Posterior cingulate gyrus (tissue), 11 donors: ENCODE measurements at regions of chr6 and their contacts with region 1.

Region 1: DNA sequence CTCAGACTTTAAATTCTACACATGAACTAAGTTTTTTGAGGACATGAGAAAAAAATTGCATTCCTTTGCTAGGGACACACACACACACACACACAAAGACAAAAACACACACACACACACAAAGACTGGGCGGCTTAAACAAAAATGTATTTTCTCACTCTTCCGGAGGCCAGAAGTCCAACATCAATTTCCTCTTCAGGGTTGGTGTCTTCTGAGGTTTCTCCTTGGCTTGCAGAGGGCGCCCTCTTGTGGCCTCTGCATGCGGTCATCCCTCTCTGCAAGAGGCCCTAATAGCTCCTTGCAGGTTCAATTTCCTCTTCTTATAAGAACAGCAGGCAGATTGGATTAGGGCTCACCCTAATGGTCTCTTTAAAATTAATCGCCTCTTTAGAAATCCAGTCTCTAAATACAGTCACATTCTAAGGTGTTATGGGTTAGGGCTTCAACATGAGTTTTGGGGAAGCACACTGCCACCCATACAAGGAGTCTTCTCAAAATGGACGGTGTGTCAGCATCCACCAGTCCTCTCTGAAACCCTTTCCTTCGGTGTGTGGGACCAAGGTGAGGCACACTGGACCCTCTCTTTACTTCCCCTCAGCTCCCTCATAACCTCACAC is 61.4 kb downstream of the GPR6 start:
- DNase-seq: peak; percentile 68 to 98 (median 87)

Region 2: DNA sequence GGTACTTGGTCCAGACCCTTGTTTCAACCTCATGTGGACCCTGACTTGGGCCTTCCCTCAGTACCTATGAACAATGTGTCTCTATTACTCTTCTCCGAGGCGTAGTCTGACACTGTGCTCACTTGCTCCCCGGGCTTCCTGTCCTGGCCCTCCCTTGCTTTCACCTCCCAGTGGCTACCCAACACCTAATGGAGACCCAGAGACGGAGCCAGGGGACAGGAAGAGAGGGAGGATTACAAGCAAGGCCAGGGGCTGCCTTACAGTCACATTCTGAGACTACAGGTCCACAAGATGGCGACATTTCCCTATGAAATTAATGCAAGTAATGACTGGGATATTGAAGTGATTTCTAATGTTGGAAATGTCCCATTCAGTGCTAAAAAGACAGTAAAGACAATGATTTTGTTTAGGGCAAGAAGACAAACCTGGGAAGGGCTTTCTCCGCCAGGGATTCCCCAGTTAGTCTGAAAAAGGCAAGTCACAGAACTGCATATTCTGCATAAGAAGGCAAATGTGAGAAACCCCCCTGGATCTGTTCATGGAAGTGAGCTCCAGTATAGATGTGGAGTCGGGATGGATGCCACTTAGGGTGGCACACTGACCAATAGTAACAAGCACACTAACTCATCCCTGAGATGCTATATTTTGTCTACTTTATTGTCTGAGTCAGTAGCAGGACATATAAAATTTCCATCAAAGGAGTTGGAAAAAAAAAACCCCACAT is 512.4 kb before region 1 on chr6:
- intact Hi-C with region 1: loop called (anchors 5 kb)
- DNase-seq: peak in 3 of 10 donors; percentile 26 to 77 (median 54)

Region 3: DNA sequence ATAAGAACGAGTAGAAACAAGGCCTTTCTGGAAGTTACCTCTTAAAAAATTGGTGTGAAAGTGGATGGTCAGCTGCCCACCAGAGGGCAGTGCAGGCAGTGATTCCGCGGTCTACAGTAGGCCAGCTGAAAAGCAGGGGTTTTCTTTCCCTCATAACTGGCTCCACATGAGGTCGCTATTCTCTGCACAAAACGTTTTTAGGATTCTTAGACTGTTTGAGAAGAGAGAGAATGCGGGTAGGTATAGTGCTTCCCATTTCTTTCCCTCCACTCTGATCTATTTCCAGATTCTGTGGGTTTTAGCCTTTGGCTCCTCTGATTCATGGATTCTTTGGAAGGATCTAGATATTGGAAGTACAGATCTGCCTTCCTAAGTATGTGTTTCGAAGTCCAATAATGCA is 334.2 kb before region 1 on chr6:
- intact Hi-C with region 1: loop called (anchors 1 kb)
- DNase-seq: peak; percentile 57 to 96 (median 82)

Region 4: GRCh38 chr6:110185879-110186278 is 146.4 kb after region 1 on chr6:
- intact Hi-C with region 1: no loop called
- DNase-seq: no peak

Region 5: GRCh38 chr6:110389689-110390382 is 350.4 kb after region 1 on chr6:
- intact Hi-C with region 1: loop called (anchors 5 kb)
- DNase-seq: no peak

Region 6: DNA sequence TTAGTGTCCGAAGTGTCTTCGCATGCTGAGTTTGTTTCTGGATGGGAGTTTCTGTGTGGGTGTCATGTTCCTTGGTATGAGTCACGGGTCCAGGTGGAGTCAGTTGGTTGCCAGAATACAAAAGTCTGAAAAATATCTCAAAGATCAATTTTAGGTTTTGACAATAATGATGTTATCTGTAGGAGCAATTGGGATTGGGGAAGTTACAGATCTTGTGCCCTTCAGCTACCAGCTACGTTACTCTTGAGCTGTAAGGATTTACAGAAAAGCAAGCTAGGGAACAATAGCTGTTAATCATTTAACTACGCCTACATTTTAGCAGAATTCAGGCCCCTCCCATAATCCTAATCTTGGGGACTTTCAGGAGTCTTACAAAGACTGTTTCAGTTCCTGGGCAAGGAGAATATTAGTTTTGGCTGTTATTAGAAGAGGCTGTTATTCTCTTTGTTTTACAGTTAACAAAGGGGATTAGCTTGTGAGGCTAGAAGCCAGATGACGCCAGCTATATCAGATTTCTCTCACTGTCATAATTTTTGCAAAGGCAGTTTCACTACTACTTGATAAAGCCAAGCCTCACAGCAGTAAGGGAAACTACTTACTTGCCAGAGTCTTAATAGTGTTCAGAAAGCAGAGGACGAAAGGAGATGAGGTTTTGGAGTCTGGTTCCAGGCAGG is 452.3 kb after region 1 on chr6:
- intact Hi-C with region 1: no loop called
- DNase-seq: no peak